Mammary epithelial cell (primary cell): ENCODE measurements at regions of chr19 and their contacts with region 1.

Region 1: GRCh38 chr19:15479391-15480345 is at the start of gene PGLYRP2:
- DNase-seq: no peak
- H3K4me3 ChIP-seq: no peak within 1 kb of the TSS
- H3K27ac ChIP-seq: no peak within 1 kb of the TSS
- H3K4me1 ChIP-seq: peaks cover 4% of the 10 kb centered on the region
- H3K27me3 ChIP-seq: no peaks in the 10 kb centered on the region
- CTCF ChIP-seq: peak; percentile 16 to 74
- total RNA-seq, gene PGLYRP2: not detected

Region 2: DNA sequence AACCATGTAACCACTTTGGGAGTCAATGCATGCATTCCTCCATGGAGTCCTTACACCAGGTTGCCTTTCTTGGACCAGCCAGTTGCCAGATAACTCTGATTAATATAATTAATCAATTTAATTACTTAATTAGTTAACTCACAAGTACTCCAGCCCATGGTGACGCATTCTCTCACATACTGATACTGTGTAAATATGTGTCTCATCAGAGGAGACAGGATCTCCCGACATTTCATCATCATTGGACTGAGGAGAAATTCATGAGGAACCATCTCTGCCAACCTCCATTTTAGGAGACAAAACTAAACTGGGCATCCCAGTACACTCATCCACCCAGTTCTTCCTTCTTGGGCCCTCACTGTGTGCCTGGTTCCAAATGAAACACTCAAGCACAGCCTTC is 436.8 kb before region 1 on chr19:
- CTCF ChIA-PET with region 1: interaction called, 12 read pairs
- dilution Hi-C with region 1: no loop called
- in situ Hi-C with region 1: no loop called
- intact Hi-C with region 1: no loop called
- DNase-seq: no peak
- H3K4me3 ChIP-seq: no peak overlapping the region
- H3K27ac ChIP-seq: no peak overlapping the region
- H3K4me1 ChIP-seq: peaks cover 10% of the 10 kb centered on the region
- H3K27me3 ChIP-seq: no peaks in the 10 kb centered on the region
- CTCF ChIP-seq: no peak

Region 3: GRCh38 chr19:15529774-15530372 is 50.2 kb after region 1 on chr19:
- CTCF ChIA-PET with region 1: no interaction called
- dilution Hi-C with region 1: loop called (anchors 5 kb)
- in situ Hi-C with region 1: no loop called
- intact Hi-C with region 1: no loop called
- DNase-seq: peak; percentile 75
- H3K4me3 ChIP-seq: no peak overlapping the region
- H3K27ac ChIP-seq: no peak overlapping the region
- H3K4me1 ChIP-seq: peaks cover 5% of the 10 kb centered on the region
- H3K27me3 ChIP-seq: no peaks in the 10 kb centered on the region
- CTCF ChIP-seq: no peak